ENCODE measurements at regions of chr6 and their contacts with region 1.

Region 1: DNA sequence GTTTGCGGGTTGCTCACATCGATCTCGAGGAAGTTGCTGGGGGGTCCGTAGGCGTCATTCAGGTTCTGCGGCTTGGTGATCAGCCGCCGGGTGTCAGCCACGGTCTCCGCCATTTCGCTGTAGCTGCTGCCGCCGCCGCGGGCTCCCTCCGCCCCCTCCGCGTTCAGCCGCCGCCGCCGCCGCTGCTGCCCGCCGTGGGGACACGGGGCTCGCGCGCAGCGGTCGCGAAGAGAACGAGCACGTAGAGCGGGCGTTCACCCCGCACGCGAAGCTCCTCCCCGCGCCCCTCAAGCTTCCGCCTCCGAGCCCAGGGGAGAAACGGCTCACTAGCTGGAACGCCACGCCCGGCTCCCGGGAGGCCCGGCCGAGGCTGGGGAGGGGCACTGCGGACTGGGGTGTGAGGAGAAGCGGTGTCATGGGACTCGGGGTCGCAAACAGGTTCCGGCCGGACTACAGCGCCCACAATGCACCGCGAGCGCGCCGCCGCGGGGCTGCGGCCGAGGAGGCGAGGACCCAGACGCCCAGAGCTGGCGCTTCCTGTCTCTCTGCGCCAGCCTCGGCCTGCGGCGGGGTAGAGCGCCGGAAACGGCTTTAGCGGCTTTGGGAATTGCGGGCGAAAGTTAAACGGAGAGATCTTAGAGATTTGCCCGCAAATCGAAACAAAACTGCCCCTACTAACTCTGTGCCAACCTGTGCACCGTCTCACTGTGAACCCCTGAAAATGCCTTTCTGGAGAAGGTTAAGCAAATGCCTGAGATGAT is at the start of gene SNX3:
- DNase-seq: peak; percentile 98
- ATAC-seq: peak; percentile 92
- H3K4me3 Mint-ChIP-seq: peak within 1 kb of the TSS; percentile 93
- H3K27ac Mint-ChIP-seq: peak within 1 kb of the TSS; percentile 98
- H3K4me1 Mint-ChIP-seq: peaks cover 43% of the 10 kb centered on the region
- H3K27me3 Mint-ChIP-seq: no peaks in the 10 kb centered on the region
- CTCF ChIP-seq: no peak
- total RNA-seq, gene SNX3: 121 and 133 TPM in 2 replicates

Region 2: DNA sequence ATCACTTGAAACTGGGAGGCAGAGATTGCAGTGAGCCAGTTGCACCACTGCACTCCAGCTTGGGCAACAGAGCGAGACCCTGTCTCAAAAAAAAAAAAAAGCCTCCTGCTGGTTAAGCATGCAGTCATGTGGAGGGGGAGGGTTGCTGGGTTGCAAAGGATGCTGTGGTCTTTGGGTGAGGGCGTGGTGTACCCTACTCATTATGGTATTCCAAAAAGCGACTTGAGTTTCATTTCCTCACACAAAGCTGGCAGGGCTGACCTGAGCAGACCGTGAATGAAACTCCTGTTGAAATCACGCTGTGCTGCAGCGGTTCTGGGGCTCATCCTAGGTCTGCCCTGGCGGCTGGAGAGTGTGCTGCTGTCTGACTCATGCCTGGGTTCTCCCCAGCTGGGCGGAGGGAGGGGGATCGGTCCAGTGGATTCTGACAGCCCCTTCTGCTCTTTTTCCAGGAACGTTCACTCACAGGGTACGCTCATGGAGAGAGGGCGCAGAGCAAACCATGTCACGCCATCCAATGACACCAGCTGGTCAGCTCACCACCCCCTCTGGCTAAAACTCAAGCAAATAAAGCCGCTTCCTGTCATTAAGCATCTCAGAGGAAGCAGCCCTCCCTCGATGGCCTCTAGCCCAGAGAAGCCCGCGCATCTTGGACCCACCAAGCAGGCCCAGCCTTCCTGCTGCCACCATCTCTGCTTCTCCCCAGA is 603.1 kb before region 1 on chr6:
- CTCF ChIA-PET with region 1: no interaction called
- POLR2A ChIA-PET with region 1: interaction called, 3 read pairs
- intact Hi-C with region 1: loop called (anchors 10 kb)
- DNase-seq: peak; percentile 70
- ATAC-seq: peak; percentile 89
- H3K4me3 Mint-ChIP-seq: peak overlapping the region; percentile 82
- H3K27ac Mint-ChIP-seq: peak overlapping the region; percentile 96
- H3K4me1 Mint-ChIP-seq: peaks cover 67% of the 10 kb centered on the region
- H3K27me3 Mint-ChIP-seq: no peaks in the 10 kb centered on the region
- CTCF ChIP-seq: no peak

Region 3: DNA sequence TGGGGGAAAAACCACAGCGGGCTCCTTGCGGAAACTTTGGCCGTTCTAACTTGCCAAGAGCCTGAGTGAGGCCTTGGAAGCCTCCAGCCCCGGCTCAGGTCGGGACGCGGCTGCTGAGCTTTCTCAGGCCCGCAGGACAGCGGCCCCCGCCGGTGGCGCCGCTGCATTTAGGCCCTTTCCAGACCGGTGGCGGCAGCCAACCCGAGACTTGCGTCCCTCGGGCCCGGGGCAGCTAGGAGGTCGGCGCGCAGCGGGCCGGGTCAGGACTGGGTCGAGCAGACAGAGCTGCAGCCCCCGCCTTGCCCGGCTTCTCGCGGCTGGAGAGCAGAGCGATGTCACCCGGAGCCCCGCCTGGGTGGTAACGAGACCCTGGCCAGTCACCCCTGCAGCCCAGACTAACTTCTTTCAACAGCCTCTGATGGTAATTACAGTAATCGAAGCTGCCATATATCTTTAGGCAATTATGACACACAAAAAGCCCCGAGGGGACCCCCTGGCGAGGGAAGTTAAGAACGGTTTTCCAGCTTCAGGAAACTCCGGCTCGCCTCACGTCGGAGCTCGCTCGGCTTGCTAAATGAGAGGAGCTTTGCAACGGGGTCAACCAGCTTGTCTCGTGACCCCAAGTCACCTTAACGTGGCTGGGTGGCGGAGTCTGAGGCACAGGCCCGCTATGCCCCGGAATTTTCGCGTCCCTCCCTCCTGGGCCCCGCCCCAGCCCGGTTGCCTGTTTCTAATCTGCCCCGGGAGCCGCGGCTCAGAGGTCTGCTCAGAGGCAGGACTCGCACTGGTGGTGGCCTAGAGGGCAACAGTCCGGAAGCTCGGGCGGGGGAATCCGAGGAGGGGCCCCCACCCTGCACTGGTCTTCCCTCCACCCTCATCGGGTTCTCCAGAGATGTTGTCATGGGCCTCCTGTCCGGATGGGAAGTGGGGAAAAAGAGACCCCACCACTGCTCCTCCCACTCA is 92.2 kb before region 1 on chr6:
- CTCF ChIA-PET with region 1: no interaction called
- POLR2A ChIA-PET with region 1: interaction called, 5 read pairs
- intact Hi-C with region 1: loop called (anchors 2 kb)
- DNase-seq: peak; percentile 49
- ATAC-seq: peak; percentile 45
- H3K4me3 Mint-ChIP-seq: peak overlapping the region; percentile 57
- H3K27ac Mint-ChIP-seq: no peak overlapping the region
- H3K4me1 Mint-ChIP-seq: peaks cover 53% of the 10 kb centered on the region
- H3K27me3 Mint-ChIP-seq: peaks cover 76% of the 10 kb centered on the region
- CTCF ChIP-seq: no peak

Region 4: GRCh38 chr6:108294727-108295625 is 34.0 kb after region 1 on chr6 and contains the start of gene AFG1L:
- CTCF ChIA-PET with region 1: interaction called, 6 read pairs
- POLR2A ChIA-PET with region 1: interaction called, 102 read pairs
- intact Hi-C with region 1: loop called (anchors 1 kb)
- DNase-seq: peak; percentile 89
- ATAC-seq: peak; percentile 92
- H3K4me3 Mint-ChIP-seq: peak within 1 kb of the TSS; percentile 99
- H3K27ac Mint-ChIP-seq: peak within 1 kb of the TSS; percentile 100
- H3K4me1 Mint-ChIP-seq: peaks cover 30% of the 10 kb centered on the region
- H3K27me3 Mint-ChIP-seq: no peaks in the 10 kb centered on the region
- CTCF ChIP-seq: no peak
- total RNA-seq, gene AFG1L: 7.5 and 10.3 TPM in 2 replicates

Region 5: GRCh38 chr6:108492131-108492766 is 231.3 kb after region 1 on chr6:
- CTCF ChIA-PET with region 1: interaction called, 16 read pairs
- POLR2A ChIA-PET with region 1: interaction called, 6 read pairs
- intact Hi-C with region 1: no loop called
- DNase-seq: no peak
- ATAC-seq: peak; percentile 40
- H3K4me3 Mint-ChIP-seq: no peak overlapping the region
- H3K27ac Mint-ChIP-seq: no peak overlapping the region
- H3K4me1 Mint-ChIP-seq: no peaks in the 10 kb centered on the region
- H3K27me3 Mint-ChIP-seq: no peaks in the 10 kb centered on the region
- CTCF ChIP-seq: no peak

Measured in activated B cell treated with CpG ODN at 0.5 μM for 24 hours (primary cell).